ENCODE measurements at regions of chr21 and their contacts with region 1.

Region 1: DNA sequence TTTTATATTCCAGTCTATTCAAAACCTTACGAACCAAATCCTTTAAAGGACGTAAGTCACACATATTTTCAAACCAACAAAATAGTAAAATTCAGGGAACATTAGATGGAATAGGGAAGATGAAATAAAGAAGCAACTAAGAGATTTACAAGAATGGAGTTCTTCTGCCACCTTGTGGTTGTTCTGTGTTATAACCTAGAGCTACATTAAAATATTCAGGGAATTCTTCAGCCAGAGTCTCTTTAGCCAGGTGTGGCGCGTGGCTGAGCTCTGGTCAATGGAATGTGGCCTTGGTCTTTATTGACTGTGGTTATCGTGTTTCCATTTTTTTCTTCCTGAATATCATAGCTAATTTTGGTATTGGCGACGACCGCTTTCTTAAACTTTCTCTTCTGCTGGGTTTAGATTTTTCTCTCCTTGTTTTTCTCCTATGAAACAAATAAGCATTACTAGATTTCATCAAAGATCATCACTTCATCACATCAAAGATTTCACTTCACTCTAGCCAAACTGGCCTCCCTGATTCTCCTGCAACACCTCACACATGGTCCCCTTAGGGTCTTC is 221.3 kb downstream of the MRPL39 start:
- H3K4me3 Mint-ChIP-seq: no peak overlapping the region
- H3K27ac Mint-ChIP-seq: no peak overlapping the region
- H3K4me1 Mint-ChIP-seq: peaks cover 5% of the 10 kb centered on the region
- H3K27me3 Mint-ChIP-seq: peaks cover 7% of the 10 kb centered on the region

Region 2: GRCh38 chr21:23853796-23854379 is 1532.1 kb before region 1 on chr21:
- intact Hi-C with region 1: loop called (anchors 5 kb)
- H3K4me3 Mint-ChIP-seq: no peak overlapping the region
- H3K27ac Mint-ChIP-seq: no peak overlapping the region
- H3K4me1 Mint-ChIP-seq: no peaks in the 10 kb centered on the region
- H3K27me3 Mint-ChIP-seq: no peaks in the 10 kb centered on the region

Region 3: GRCh38 chr21:24895885-24896734 is 489.9 kb before region 1 on chr21:
- intact Hi-C with region 1: loop called (anchors 10 kb)
- H3K4me3 Mint-ChIP-seq: no peak overlapping the region
- H3K27ac Mint-ChIP-seq: no peak overlapping the region
- H3K4me1 Mint-ChIP-seq: no peaks in the 10 kb centered on the region
- H3K27me3 Mint-ChIP-seq: no peaks in the 10 kb centered on the region

Region 4: GRCh38 chr21:25283720-25284119 is 102.3 kb before region 1 on chr21:
- intact Hi-C with region 1: loop called (anchors 5 kb)
- H3K4me3 Mint-ChIP-seq: no peak overlapping the region
- H3K27ac Mint-ChIP-seq: no peak overlapping the region
- H3K4me1 Mint-ChIP-seq: no peaks in the 10 kb centered on the region
- H3K27me3 Mint-ChIP-seq: no peaks in the 10 kb centered on the region